ENCODE measurements at regions of chr10 and their contacts with region 1.

Region 1: GRCh38 chr10:100993986-100994708 is 5.5 kb upstream of the LZTS2 start:
- DNase-seq: no peak
- H3K4me3 ChIP-seq: no peak overlapping the region
- H3K27ac ChIP-seq: no peak overlapping the region
- H3K4me1 ChIP-seq: peaks cover 4 to 11% (median 7%) of the 10 kb centered on the region in 4 experiments
- H3K27me3 ChIP-seq: no peaks in the 10 kb centered on the region
- CTCF ChIP-seq: peak in 2 of 3 experiments; percentile 62 to 72; a peak in 3 of 4 replicates
- EP300 ChIP-seq: no peak
- POLR2A ChIP-seq: peak in 1 of 2 experiments; percentile 36; a peak in 1 of 3 replicates
- RAD21 ChIP-seq: peak; percentile 67 to 71

Region 2: DNA sequence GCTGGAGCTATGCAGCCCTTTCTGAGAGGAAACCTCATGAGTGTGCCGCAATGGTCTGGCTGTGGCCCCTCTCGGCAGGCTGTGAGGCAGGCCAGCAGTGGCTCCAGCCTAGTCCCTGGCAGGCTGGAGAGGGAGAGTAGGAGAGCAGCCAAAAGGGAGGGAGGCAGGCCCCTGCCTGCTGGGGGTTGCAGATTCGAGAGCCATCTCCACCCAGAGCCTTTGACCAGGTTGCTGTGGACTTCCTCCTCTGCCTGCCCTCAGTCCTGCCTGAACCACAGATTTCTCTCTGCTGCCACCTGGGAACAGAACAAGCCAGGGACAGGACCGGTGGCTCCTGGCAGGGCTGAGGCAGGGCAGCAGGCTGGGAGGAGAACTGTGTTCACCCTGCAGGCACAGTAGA is 234.8 kb before region 1 on chr10:
- CTCF ChIA-PET with region 1: no interaction called
- POLR2A ChIA-PET with region 1: no interaction called
- DNase-seq: no peak
- H3K4me3 ChIP-seq: no peak overlapping the region
- H3K27ac ChIP-seq: no peak overlapping the region
- H3K4me1 ChIP-seq: peaks cover 0 to 2% (median 0%) of the 10 kb centered on the region in 4 experiments; a peak in 1 of 7 replicates
- H3K27me3 ChIP-seq: peaks cover under 1 to 40% (median 32%) of the 10 kb centered on the region in 4 experiments
- CTCF ChIP-seq: peak; percentile 26 to 36 (median 34)
- EP300 ChIP-seq: no peak
- POLR2A ChIP-seq: no peak
- RAD21 ChIP-seq: peak in 1 of 2 experiments; percentile 33; a peak in 3 of 4 replicates

Region 3: GRCh38 chr10:100847440-100847839 is 146.7 kb before region 1 on chr10:
- CTCF ChIA-PET with region 1: no interaction called
- POLR2A ChIA-PET with region 1: no interaction called
- DNase-seq: no peak
- H3K4me3 ChIP-seq: no peak overlapping the region
- H3K27ac ChIP-seq: no peak overlapping the region
- H3K4me1 ChIP-seq: no peaks in the 10 kb centered on the region
- H3K27me3 ChIP-seq: peaks cover 0 to 2% (median 0%) of the 10 kb centered on the region in 4 experiments; a peak in 4 of 7 replicates
- CTCF ChIP-seq: no peak
- EP300 ChIP-seq: no peak
- POLR2A ChIP-seq: no peak
- RAD21 ChIP-seq: no peak

Region 4: GRCh38 chr10:100872034-100872791 is 121.9 kb before region 1 on chr10:
- CTCF ChIA-PET with region 1: no interaction called
- POLR2A ChIA-PET with region 1: no interaction called
- DNase-seq: peak; percentile 27 to 92
- H3K4me3 ChIP-seq: no peak overlapping the region
- H3K27ac ChIP-seq: no peak overlapping the region
- H3K4me1 ChIP-seq: peaks cover 0 to 12% (median 7%) of the 10 kb centered on the region in 4 experiments; a peak in 5 of 7 replicates
- H3K27me3 ChIP-seq: peaks cover 0 to 29% (median 17%) of the 10 kb centered on the region in 4 experiments; a peak in 6 of 7 replicates
- CTCF ChIP-seq: peak; percentile 69 to 86 (median 84)
- EP300 ChIP-seq: no peak
- POLR2A ChIP-seq: no peak
- RAD21 ChIP-seq: peak; percentile 84 to 85

Region 5: GRCh38 chr10:100969187-100970075 is 24.7 kb before region 1 on chr10 and contains the start of gene SEMA4G:
- CTCF ChIA-PET with region 1: interaction called, 15 read pairs
- POLR2A ChIA-PET with region 1: interaction called, 38 read pairs
- DNase-seq: peak; percentile 67 to 90
- H3K4me3 ChIP-seq: peak within 1 kb of the TSS; percentile 67 to 97 (median 72)
- H3K27ac ChIP-seq: no peak within 1 kb of the TSS
- H3K4me1 ChIP-seq: peaks cover 7 to 19% (median 10%) of the 10 kb centered on the region in 4 experiments
- H3K27me3 ChIP-seq: peaks cover 0 to 3% (median 1%) of the 10 kb centered on the region in 4 experiments; a peak in 1 of 7 replicates
- CTCF ChIP-seq: peak; percentile 66 to 80 (median 71)
- EP300 ChIP-seq: no peak
- POLR2A ChIP-seq: no peak
- RAD21 ChIP-seq: peak in 1 of 2 experiments; percentile 36; a peak in 1 of 4 replicates
- total RNA-seq, gene SEMA4G: 7.1 and 7.6 TPM in 2 replicates

Region 6: DNA sequence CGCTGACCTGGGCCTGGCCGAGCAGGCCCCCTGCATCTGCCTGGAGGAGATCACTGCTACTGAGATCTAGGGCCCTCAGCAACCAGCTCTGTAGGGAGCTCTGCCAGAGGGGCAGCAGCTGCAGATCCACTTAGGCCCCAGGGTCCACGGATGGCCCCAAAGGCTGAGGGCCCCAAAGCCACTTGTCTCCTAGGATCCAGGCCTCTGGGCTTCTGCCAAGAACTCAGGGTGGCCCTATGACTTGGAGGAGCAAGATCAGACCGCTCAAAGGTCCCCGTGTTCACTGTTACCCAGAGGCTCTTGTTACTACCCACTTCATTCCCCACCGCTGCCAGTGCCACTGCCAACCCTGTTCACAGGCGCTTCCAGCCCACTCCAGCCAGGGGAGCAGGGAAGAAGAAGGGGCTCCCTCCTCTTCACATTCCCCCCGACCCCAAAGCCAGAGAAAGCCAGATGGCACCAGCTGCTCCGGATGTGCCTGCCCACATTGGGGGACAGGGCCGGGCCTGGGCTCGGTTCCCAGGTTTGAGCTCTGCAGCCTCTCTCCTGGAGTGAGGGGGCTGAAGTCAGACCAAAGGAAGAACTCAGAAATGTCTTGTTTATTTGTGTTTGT is 13.1 kb after region 1 on chr10:
- CTCF ChIA-PET with region 1: interaction called, 352 read pairs
- POLR2A ChIA-PET with region 1: interaction called, 143 read pairs
- DNase-seq: no peak
- H3K4me3 ChIP-seq: no peak overlapping the region
- H3K27ac ChIP-seq: no peak overlapping the region
- H3K4me1 ChIP-seq: peaks cover 0 to 12% (median 5%) of the 10 kb centered on the region in 4 experiments; a peak in 5 of 7 replicates
- H3K27me3 ChIP-seq: no peaks in the 10 kb centered on the region
- CTCF ChIP-seq: no peak
- EP300 ChIP-seq: no peak
- POLR2A ChIP-seq: no peak
- RAD21 ChIP-seq: no peak